Activated CD4-positive, alpha-beta memory T cell treated with anti-CD3 and anti-CD28 coated beads for 36 hours (primary cell): ENCODE measurements at regions of chr18 and their contacts with region 1.

Region 1: GRCh38 chr18:48161191-48161910 is 230.9 kb upstream of the SMAD2 start:
- DNase-seq: peak; percentile 78
- H3K4me3 Mint-ChIP-seq: peak overlapping the region; percentile 54
- H3K27ac Mint-ChIP-seq: no peak overlapping the region
- H3K4me1 Mint-ChIP-seq: peaks cover 3% of the 10 kb centered on the region
- H3K27me3 Mint-ChIP-seq: peaks cover 4% of the 10 kb centered on the region

Region 2: GRCh38 chr18:48124857-48125626 is 36.3 kb before region 1 on chr18:
- CTCF ChIA-PET with region 1: no interaction called
- POLR2A ChIA-PET with region 1: interaction called, 3 read pairs
- intact Hi-C with region 1: loop called (anchors 1 kb)
- DNase-seq: peak; percentile 73
- H3K4me3 Mint-ChIP-seq: no peak overlapping the region
- H3K27ac Mint-ChIP-seq: no peak overlapping the region
- H3K4me1 Mint-ChIP-seq: peaks cover 13% of the 10 kb centered on the region
- H3K27me3 Mint-ChIP-seq: peaks cover 21% of the 10 kb centered on the region

Region 3: DNA sequence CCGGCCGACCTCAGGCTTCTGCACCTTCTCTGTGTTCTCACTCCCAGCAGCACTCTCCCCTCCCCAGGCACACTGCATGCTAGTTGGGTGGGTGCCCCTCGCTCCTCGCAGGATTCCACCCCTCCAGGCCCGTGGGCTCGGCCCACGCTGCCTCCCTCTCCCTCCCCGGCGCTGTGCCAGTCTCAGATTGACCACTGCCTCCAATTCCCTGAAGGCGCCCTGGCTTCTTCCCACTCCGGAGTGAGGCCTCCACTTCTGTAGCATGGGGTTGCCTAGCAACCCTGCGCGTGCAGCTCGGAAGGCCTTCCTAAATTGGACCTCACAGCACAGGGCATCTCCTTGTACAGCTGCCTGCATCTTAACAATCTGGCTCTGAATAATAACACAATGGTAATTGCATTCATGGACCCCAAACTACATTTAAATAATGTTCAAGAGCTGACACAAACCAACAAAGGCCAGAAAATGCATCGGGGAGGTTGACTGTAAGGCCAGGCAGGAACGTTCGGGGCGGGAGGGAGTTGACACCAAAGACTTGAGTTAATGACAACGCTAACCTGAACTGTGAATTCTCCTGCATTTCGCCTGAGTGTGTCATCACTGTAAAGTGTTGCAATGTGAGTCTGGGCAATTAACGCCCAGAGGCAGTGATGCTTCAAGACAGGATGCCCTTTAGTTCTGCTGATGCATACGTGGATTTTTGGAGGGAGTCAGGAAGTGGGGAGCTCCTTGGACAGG is 24.9 kb after region 1 on chr18:
- CTCF ChIA-PET with region 1: no interaction called
- POLR2A ChIA-PET with region 1: no interaction called
- intact Hi-C with region 1: no loop called
- DNase-seq: no peak
- H3K4me3 Mint-ChIP-seq: no peak overlapping the region
- H3K27ac Mint-ChIP-seq: no peak overlapping the region
- H3K4me1 Mint-ChIP-seq: no peaks in the 10 kb centered on the region
- H3K27me3 Mint-ChIP-seq: peaks cover 19% of the 10 kb centered on the region

Region 4: GRCh38 chr18:48238206-48238605 is 76.9 kb after region 1 on chr18:
- CTCF ChIA-PET with region 1: no interaction called
- POLR2A ChIA-PET with region 1: no interaction called
- intact Hi-C with region 1: no loop called
- DNase-seq: no peak
- H3K4me3 Mint-ChIP-seq: no peak overlapping the region
- H3K27ac Mint-ChIP-seq: no peak overlapping the region
- H3K4me1 Mint-ChIP-seq: no peaks in the 10 kb centered on the region
- H3K27me3 Mint-ChIP-seq: peaks cover 28% of the 10 kb centered on the region